Heart right ventricle (tissue), 16 donors: ENCODE measurements at regions of chr7 and their contacts with region 1.

Region 1: DNA sequence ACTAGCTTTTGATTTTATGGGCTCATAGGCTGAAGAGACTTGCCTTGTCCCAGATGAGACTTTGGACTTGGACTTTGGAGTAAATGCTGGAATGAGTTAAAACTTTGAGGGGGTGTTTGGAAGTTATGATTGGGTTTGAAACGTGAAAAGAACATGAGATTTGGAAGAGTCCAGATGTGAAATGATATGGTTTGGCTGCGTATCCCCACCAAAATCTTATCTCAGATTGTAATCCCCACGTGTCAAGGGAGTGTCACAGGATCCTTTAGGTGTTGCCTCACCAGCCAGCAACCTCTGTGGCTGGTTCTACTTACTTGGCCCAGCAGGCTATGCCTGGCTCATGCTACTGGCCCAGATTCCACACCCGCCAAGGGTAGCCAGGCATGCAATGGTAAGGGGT is 119.6 kb upstream of the NPY start:
- DNase-seq: no peak
- ATAC-seq: no peak
- H3K4me3 ChIP-seq: no peak overlapping the region
- H3K27ac ChIP-seq: no peak overlapping the region
- H3K4me1 ChIP-seq: no peaks in the 10 kb centered on the region
- H3K27me3 ChIP-seq: no peaks in the 10 kb centered on the region
- CTCF ChIP-seq: no peak

Region 2: GRCh38 chr7:24630596-24630995 is 466.2 kb after region 1 on chr7:
- intact Hi-C with region 1: loop called in 1 of 10 experiments (anchors 5 kb)
- DNase-seq: no peak
- ATAC-seq: no peak
- H3K4me3 ChIP-seq: no peak overlapping the region
- H3K27ac ChIP-seq: no peak overlapping the region
- H3K4me1 ChIP-seq: no peaks in the 10 kb centered on the region
- H3K27me3 ChIP-seq: no peaks in the 10 kb centered on the region
- CTCF ChIP-seq: no peak